Breast epithelium (tissue), 4 donors: ENCODE measurements at regions of chr1 and their contacts with region 1.

Region 1: GRCh38 chr1:153626922-153627796 is at the start of gene S100A13:
- DNase-seq: peak; percentile 70 to 74
- H3K4me3 ChIP-seq: peak within 1 kb of the TSS; percentile 56 to 74 (median 61)
- H3K27ac ChIP-seq: peak within 1 kb of the TSS; percentile 96 to 97
- H3K4me1 ChIP-seq: peaks cover 0 to 3% of the 10 kb centered on the region in 2 donors
- H3K27me3 ChIP-seq: no peaks in the 10 kb centered on the region
- CTCF ChIP-seq: peak; percentile 12 to 51 (median 43)
- POLR2A ChIP-seq: peak; percentile 65
- total RNA-seq, gene S100A13: 163 to 221 (median 198) TPM

Region 2: DNA sequence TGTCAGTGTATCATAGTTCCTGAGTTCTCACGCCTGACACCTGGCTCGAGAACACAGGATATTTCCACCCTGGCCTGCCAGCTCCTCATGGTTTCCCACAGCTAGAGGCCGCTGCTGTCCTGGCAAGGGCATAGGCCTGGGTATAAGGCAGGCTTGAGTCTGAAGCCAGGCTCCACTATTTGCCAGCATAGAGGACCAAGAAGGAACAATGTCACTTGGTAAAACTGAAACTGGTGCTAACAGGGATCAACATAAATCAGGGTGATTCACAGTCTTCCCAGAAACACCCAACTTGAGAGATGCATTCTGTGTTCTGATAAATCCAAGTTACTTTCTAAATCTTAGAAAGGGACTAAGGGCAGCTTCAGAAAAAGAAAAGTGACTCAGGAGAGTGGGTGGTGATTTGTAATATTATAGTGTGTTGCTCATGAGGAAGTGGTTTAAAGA is 54.6 kb before region 1 on chr1:
- intact Hi-C with region 1: loop called (anchors 10 kb)
- DNase-seq: peak; percentile 83 to 89
- H3K4me3 ChIP-seq: no peak overlapping the region
- H3K27ac ChIP-seq: peak overlapping the region; percentile 71 to 84
- H3K4me1 ChIP-seq: peaks cover 0 to 8% of the 10 kb centered on the region in 2 donors
- H3K27me3 ChIP-seq: no peaks in the 10 kb centered on the region
- CTCF ChIP-seq: peak; percentile 31 to 91 (median 84)
- POLR2A ChIP-seq: no peak

Region 3: GRCh38 chr1:154371436-154371835 is 744.3 kb after region 1 on chr1:
- intact Hi-C with region 1: no loop called
- DNase-seq: no peak
- H3K4me3 ChIP-seq: no peak overlapping the region
- H3K27ac ChIP-seq: no peak overlapping the region
- H3K4me1 ChIP-seq: no peaks in the 10 kb centered on the region
- H3K27me3 ChIP-seq: no peaks in the 10 kb centered on the region
- CTCF ChIP-seq: no peak
- POLR2A ChIP-seq: no peak